Mammary epithelial cell (primary cell): ENCODE measurements at regions of chr2 and their contacts with region 1.

Region 1: DNA sequence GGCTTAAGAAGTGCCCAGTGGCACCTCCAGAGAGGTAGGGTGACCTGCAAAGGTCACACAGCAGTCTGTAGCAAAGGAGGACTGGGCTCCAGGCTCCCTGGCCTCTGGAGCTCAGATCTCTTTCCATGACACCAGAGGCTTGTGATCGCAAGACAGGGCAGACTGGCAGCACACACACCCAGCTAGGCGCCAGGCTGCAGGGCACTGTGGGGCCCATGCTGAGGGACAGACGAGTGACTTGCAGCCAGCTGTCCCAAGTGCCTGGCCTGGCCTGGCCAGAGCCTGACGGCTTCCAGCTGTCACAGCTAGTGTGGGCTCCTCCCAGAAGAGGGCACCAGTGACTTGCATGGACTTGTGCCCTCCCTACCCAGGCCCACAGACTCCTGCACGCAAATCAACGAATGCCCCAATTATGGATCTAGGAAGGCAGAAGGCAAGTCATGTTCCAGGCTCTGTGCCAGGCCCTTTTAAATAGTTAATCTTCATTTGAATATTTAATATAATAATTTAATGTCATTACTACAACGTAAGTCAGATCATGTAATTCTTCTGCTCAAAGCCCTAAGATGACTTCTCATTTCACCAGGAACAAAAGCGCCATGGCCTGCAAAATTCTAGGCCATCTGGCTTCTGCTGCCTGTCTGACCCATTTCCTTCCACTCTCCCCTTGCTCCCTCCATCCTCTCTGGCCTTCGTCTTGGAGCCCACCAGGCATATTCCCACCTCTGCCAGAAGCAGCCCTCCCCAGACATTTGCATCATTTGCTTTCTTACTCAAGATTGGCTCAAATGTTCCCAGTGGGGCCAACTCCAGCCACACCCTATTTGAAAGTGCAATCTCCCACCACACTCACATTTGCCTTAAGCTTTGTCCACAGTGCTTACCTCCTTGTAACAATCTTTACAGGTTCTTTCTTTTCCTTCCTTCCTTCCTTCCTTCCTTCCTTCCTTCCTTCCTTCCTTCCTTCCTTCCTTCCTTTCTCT is 3.7 kb upstream of the SPEG start:
- DNase-seq: peak; percentile 41
- H3K4me3 ChIP-seq: no peak overlapping the region
- H3K27ac ChIP-seq: no peak overlapping the region
- H3K4me1 ChIP-seq: peaks cover 6% of the 10 kb centered on the region
- H3K27me3 ChIP-seq: no peaks in the 10 kb centered on the region
- CTCF ChIP-seq: peak; percentile 24 to 64

Region 2: GRCh38 chr2:219199470-219200211 is 231.3 kb before region 1 on chr2:
- CTCF ChIA-PET with region 1: no interaction called
- dilution Hi-C with region 1: no loop called
- in situ Hi-C with region 1: no loop called
- intact Hi-C with region 1: no loop called
- DNase-seq: no peak
- H3K4me3 ChIP-seq: no peak overlapping the region
- H3K27ac ChIP-seq: no peak overlapping the region
- H3K4me1 ChIP-seq: no peaks in the 10 kb centered on the region
- H3K27me3 ChIP-seq: no peaks in the 10 kb centered on the region
- CTCF ChIP-seq: no peak

Region 3: DNA sequence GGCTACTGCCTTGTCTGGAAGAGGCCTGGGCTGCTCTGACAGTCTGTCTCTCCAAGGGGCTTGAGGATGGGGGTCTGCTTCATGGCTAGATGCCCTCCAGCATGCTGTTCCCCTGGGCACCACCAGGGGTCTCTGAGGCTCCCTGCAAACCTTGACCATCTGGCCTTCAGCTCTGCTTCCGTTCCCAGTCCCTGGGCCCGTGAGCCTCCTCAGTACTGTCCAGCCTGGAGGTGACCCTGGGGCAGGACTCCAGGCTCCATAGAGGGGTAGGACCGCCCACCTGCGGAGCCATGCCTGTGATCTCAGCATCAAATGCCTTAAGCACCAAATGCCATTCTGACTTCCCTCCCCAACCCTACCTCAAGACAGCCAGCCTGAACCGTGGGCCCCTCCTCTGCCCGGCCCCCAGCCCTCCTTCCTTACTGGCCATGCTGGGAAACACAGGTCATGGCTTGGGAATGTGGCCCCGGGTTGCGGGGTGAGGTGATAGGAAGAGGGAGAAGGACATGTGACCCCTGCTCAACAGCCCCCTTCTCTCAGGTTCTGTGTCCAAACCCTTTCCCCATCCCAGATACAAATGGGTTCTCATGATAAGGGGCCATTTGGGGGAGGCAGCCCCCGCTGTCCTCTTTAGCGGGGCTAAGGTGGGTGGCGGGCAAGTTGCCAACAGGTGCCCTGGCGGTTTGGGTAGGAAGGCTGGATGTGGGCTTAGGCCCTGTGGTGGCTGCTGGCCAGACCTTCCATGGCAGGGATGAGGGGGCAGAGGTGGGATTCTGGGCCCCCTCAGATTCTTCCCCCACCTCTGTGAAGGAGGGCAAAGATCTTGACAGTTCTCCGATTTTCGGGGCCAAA is 28.8 kb after region 1 on chr2:
- CTCF ChIA-PET with region 1: no interaction called
- dilution Hi-C with region 1: no loop called
- in situ Hi-C with region 1: no loop called
- intact Hi-C with region 1: loop called (anchors 1 kb)
- DNase-seq: peak; percentile 30
- H3K4me3 ChIP-seq: no peak overlapping the region
- H3K27ac ChIP-seq: no peak overlapping the region
- H3K4me1 ChIP-seq: peaks cover 49% of the 10 kb centered on the region
- H3K27me3 ChIP-seq: no peaks in the 10 kb centered on the region
- CTCF ChIP-seq: peak; percentile 93 to 97

Region 4: DNA sequence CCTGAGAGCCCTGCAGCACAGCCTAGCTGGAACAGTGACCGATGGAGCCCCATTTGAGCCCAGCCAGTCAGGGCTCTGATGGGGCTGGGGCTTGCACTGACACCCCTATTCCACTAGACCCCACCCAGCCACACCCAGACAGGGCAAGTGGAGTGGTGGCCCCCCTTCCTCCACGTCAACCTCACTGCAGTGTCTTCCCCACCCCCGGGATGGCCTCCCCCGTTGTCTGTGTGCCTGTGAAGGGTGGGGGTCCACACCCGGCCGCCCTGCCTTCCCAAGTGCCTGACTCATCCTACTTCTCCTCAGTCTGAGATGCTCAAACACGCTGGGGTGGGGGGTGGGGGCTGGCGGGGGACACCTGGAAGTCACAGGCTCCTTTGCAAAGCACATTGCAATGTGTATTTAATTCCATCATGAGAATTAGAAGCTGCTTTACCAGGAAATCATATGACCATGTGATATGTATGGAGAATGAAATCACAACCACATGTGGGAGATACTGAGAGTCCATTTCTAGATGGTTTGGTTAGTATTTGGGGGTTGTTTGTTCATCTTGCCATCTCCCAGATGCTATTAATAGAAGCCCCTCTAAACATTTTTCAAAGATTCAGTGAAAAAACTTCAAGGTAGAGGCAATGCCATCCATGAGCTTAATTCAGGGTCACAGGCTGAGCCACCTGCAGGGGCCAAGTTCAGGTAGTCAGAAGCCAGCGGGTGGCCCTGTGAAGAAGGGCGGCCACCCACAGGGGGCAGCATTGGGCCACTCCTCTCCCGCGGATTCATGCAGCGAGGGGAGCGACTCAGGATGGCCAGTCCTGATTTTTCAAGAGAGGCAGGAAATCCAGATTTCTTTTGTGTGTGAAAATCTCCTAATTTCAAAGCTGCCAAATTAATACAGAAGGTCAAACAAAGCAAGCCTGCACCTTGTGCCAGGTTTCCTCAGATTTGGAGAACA is 45.0 kb after region 1 on chr2:
- CTCF ChIA-PET with region 1: no interaction called
- dilution Hi-C with region 1: no loop called
- in situ Hi-C with region 1: no loop called
- intact Hi-C with region 1: loop called (anchors 1 kb)
- DNase-seq: no peak
- H3K4me3 ChIP-seq: no peak overlapping the region
- H3K27ac ChIP-seq: no peak overlapping the region
- H3K4me1 ChIP-seq: no peaks in the 10 kb centered on the region
- H3K27me3 ChIP-seq: no peaks in the 10 kb centered on the region
- CTCF ChIP-seq: peak; percentile 54 to 65

Region 5: GRCh38 chr2:219498280-219499057 is 67.5 kb after region 1 on chr2 and contains the start of gene GMPPA:
- CTCF ChIA-PET with region 1: interaction called, 10 read pairs
- dilution Hi-C with region 1: no loop called
- in situ Hi-C with region 1: no loop called
- intact Hi-C with region 1: loop called (anchors 2 kb)
- DNase-seq: peak; percentile 98
- H3K4me3 ChIP-seq: peak within 1 kb of the TSS; percentile 57 to 71 (median 65)
- H3K27ac ChIP-seq: peak within 1 kb of the TSS; percentile 53
- H3K4me1 ChIP-seq: peaks cover 18% of the 10 kb centered on the region
- H3K27me3 ChIP-seq: no peaks in the 10 kb centered on the region
- CTCF ChIP-seq: no peak
- total RNA-seq, gene GMPPA: 37.8 to 50.1 TPM

Region 6: GRCh38 chr2:219675221-219675620 is 244.3 kb after region 1 on chr2:
- CTCF ChIA-PET with region 1: interaction called, 13 read pairs
- dilution Hi-C with region 1: no loop called
- in situ Hi-C with region 1: no loop called
- intact Hi-C with region 1: no loop called
- DNase-seq: peak; percentile 39
- H3K4me3 ChIP-seq: no peak overlapping the region
- H3K27ac ChIP-seq: no peak overlapping the region
- H3K4me1 ChIP-seq: no peaks in the 10 kb centered on the region
- H3K27me3 ChIP-seq: no peaks in the 10 kb centered on the region
- CTCF ChIP-seq: no peak